Activated CD4-positive, alpha-beta T cell treated with anti-CD3 and anti-CD28 coated beads for 36 hours (primary cell): ENCODE measurements at regions of chr12 and their contacts with region 1.

Region 1: GRCh38 chr12:49288412-49288853 is 6.5 kb upstream of the PRPH start:
- DNase-seq: peak; percentile 81
- ATAC-seq: peak; percentile 80
- H3K4me3 Mint-ChIP-seq: no peak overlapping the region
- H3K27ac Mint-ChIP-seq: no peak overlapping the region
- H3K4me1 Mint-ChIP-seq: no peaks in the 10 kb centered on the region
- H3K27me3 Mint-ChIP-seq: peaks cover 22% of the 10 kb centered on the region

Region 2: DNA sequence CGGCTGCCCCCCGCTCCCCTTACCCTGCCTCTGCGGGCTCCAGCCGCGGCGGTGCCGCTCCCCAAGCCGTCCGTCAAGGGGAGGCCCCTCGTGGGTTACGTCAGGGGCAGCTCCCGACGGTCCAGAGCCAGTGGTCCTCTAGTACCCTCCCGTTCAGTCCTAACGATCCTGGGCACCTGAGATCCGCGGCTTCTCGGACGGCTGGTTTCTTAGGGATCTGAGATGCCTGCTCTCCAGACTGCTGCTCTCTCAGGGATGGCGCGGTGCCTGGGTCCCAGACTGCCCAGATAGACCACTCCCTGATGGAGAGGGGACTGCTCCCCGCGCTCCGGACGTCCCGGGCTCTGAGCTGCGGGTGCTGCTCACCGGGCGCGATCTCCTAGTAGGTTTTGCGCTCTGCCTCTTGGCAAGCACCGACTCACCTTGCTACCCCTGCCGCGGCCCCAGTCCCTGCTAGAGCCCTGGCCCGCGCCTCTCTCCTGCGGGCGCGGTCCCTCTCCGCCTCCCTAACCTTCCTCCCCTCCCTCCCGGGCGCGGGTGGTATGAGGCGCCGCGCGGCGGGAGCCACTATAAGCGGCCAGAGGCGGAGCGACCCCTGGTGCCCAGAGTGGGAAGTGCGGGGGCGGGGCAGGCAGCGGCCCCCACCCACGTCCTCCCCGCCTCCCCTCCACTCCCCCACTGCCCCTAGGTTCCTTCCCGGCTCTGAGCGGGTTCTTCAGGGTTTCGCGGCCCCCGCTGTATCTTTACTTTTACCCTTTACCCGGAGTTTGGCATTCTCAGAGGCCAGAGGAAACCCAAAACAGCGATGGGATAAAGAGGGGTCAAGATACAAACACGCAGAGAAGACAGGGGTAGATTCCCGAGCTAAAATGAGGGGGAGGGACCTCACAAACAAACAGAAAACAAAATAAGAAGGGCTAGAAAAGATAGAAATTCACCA is 48.5 kb after region 1 on chr12 and contains the start of gene C1QL4:
- CTCF ChIA-PET with region 1: interaction called, 74 read pairs
- POLR2A ChIA-PET with region 1: no interaction called
- intact Hi-C with region 1: loop called (anchors 1 kb)
- DNase-seq: peak; percentile 92
- ATAC-seq: peak; percentile 82
- H3K4me3 Mint-ChIP-seq: peak within 1 kb of the TSS; percentile 34
- H3K27ac Mint-ChIP-seq: no peak within 1 kb of the TSS
- H3K4me1 Mint-ChIP-seq: peaks cover 25% of the 10 kb centered on the region
- H3K27me3 Mint-ChIP-seq: peaks cover 75% of the 10 kb centered on the region
- total RNA-seq, gene C1QL4: not detected